Spleen (tissue), 13 donors: ENCODE measurements at regions of chr5 and their contacts with region 1.

Region 1: GRCh38 chr5:132386644-132387286 is 17.3 kb downstream of the SLC22A5 start:
- DNase-seq: peak; percentile 93
- H3K4me3 ChIP-seq: peak overlapping the region in 1 of 8 donors; percentile 3
- H3K27ac ChIP-seq: peak overlapping the region; percentile 13 to 88 (median 82)
- H3K4me1 ChIP-seq: peaks cover 22 to 56% (median 49%) of the 10 kb centered on the region in 6 donors
- H3K27me3 ChIP-seq: no peaks in the 10 kb centered on the region
- CTCF ChIP-seq: peak; percentile 89 to 96 (median 94)
- POLR2A ChIP-seq: no peak

Region 2: GRCh38 chr5:132327252-132327955 is 59.4 kb before region 1 on chr5:
- intact Hi-C with region 1: no loop called
- DNase-seq: no peak
- H3K4me3 ChIP-seq: no peak overlapping the region
- H3K27ac ChIP-seq: no peak overlapping the region
- H3K4me1 ChIP-seq: no peaks in the 10 kb centered on the region
- H3K27me3 ChIP-seq: no peaks in the 10 kb centered on the region
- CTCF ChIP-seq: no peak
- POLR2A ChIP-seq: no peak

Region 3: DNA sequence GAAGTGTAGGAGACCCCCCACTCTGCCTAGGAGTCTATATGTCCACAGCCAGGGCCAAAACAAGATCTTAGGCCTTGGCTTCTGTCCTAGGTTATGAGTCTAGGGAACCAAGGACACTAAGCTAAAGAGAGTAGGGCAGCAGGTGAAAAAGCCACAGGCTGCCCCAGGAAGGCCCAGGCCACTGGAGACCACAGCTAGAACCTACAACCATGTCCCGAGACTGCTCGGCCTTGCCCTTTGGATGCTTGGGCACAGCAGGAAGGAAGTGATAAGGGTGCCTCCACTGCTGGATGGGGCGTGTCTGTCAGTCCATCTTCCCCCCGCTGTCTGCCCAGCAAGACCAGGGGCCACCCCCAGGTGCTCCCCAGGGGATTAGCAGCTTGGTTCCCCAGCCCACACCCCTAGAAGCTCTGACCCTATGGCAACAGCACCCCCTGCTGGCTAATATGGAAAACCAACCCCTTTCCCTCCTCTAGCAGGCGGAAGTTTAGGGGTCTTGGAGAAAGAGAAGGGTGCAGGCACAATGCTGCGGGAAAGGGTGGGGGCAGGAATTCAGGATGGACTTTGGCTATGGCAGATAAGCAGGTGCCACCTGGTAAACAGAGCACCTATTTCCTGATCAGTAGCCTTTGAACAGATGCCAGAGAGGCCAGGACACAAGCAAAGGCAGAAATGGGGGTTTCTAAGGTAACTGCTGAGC is 114.3 kb after region 1 on chr5:
- intact Hi-C with region 1: loop called (anchors 1 kb)
- DNase-seq: peak; percentile 93
- H3K4me3 ChIP-seq: no peak overlapping the region
- H3K27ac ChIP-seq: peak overlapping the region; percentile 48 to 100 (median 96)
- H3K4me1 ChIP-seq: peaks cover 28 to 80% (median 54%) of the 10 kb centered on the region in 6 donors
- H3K27me3 ChIP-seq: no peaks in the 10 kb centered on the region
- CTCF ChIP-seq: peak; percentile 88 to 96 (median 92)
- POLR2A ChIP-seq: no peak

Region 4: GRCh38 chr5:132714456-132715307 is 327.9 kb after region 1 on chr5:
- intact Hi-C with region 1: loop called (anchors 10 kb)
- DNase-seq: no peak
- H3K4me3 ChIP-seq: no peak overlapping the region
- H3K27ac ChIP-seq: no peak overlapping the region
- H3K4me1 ChIP-seq: peaks cover 0 to 9% (median 0%) of the 10 kb centered on the region in 6 donors
- H3K27me3 ChIP-seq: no peaks in the 10 kb centered on the region
- CTCF ChIP-seq: peak in 7 of 11 experiments; percentile 17 to 41 (median 29)
- POLR2A ChIP-seq: no peak

Region 5: GRCh38 chr5:132819468-132819867 is 432.7 kb after region 1 on chr5:
- intact Hi-C with region 1: loop called (anchors 2 kb)
- DNase-seq: no peak
- H3K4me3 ChIP-seq: peak overlapping the region in 3 of 8 donors; percentile 15 to 22 (median 20)
- H3K27ac ChIP-seq: no peak overlapping the region
- H3K4me1 ChIP-seq: peaks cover 0 to 25% (median 16%) of the 10 kb centered on the region in 6 donors
- H3K27me3 ChIP-seq: peaks cover 0 to 63% (median 25%) of the 10 kb centered on the region in 7 donors
- CTCF ChIP-seq: no peak
- POLR2A ChIP-seq: no peak